AG04450 (cell line): ENCODE measurements at regions of chr9 and their contacts with region 1.

Region 1: GRCh38 chr9:97921959-97922724 is at the start of gene TRMO:
- DNase-seq: peak; percentile 98
- H3K4me3 ChIP-seq: peak within 1 kb of the TSS; percentile 81
- H3K27ac ChIP-seq: peak within 1 kb of the TSS; percentile 97
- H3K27me3 ChIP-seq: peaks cover 9% of the 10 kb centered on the region
- CTCF ChIP-seq: peak; percentile 75
- polyA plus RNA-seq, gene TRMO: 11.1 and 12.6 TPM in 2 replicates

Region 2: DNA sequence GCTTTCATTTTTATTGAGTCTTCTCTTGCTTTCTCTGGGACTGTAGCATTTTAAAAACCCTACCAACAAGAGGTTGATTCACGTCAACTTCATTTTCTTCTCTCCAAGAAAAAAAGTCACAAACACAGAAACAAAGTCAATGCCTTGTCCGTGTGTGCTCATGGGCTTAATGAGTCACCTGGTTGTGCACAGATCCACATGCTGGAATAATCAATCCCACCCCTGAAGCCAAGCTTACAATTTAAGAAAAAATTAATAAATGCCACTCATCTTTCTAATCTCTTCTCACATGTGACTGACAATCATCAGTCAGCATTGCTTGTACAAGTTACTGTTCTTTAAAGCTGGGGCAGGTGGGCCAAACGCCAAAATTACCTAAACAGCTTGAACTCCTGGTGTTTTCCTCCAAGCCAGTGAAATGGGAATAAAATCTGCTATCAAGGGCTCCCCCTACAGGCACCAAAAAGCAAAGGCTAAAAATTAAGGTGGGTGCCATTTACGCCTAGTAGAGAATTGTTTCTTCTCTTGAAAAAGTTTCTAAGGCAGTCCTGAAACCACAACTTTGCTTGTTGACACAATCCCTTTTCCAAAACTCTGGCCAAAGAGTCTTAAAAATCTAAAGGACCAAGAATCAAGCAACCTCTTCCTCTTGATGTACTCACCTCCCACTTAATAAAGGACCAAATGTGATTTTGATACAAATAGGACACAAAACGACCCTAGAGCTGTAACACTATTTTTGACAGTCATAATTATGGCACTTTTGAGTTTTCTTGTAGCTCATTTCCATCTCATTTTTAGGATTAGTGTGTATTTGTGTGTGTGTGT is 21.2 kb before region 1 on chr9:
- CTCF ChIA-PET with region 1: interaction called, 44 read pairs
- POLR2A ChIA-PET with region 1: interaction called, 7 read pairs
- DNase-seq: peak; percentile 21
- H3K4me3 ChIP-seq: no peak overlapping the region
- H3K27ac ChIP-seq: no peak overlapping the region
- H3K27me3 ChIP-seq: no peaks in the 10 kb centered on the region
- CTCF ChIP-seq: peak; percentile 79

Region 3: DNA sequence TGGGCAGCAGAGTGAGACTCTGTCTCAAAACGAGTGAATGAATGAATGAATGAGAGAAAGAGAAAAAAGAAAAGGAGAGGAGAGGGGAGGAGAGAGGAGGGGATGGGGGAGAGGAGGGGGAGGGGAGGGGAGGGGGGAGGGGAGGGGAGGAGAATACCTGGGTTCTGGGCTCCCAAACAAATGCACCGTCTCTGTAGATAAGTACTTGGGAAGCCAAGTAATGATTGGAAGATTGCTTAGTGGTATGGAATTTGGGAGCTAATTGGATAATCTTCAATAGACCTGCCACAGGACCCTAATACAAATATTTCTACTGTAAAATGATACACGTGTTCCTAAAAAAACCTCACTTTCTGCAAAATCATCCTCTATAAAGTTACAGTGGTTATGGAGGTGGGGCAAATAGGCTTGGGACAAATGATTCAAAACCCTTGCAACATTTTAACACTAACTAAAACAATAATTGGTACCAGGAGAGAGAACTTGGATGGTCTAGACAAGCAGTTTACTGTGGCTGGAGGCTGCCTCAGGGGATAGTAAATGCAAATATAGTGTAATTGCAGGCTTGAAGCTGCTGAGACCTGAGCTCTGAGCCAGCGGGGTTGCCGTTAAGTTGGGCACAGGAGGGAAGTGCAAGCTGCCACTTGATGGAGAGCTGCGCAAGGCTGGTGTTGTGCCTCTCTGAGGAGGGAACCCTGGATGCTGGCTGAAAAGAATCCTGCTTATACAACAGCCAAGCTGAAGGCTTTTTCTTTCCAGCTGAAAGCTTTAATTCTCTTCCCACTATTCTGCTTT is 12.4 kb after region 1 on chr9:
- CTCF ChIA-PET with region 1: interaction called, 15 read pairs
- POLR2A ChIA-PET with region 1: no interaction called
- DNase-seq: no peak
- H3K4me3 ChIP-seq: no peak overlapping the region
- H3K27ac ChIP-seq: no peak overlapping the region
- H3K27me3 ChIP-seq: peaks cover 35% of the 10 kb centered on the region
- CTCF ChIP-seq: no peak

Region 4: GRCh38 chr9:97958812-97959511 is 36.8 kb after region 1 on chr9:
- CTCF ChIA-PET with region 1: interaction called, 45 read pairs
- POLR2A ChIA-PET with region 1: interaction called, 5 read pairs
- DNase-seq: peak; percentile 63
- H3K4me3 ChIP-seq: no peak overlapping the region
- H3K27ac ChIP-seq: peak overlapping the region; percentile 33
- H3K27me3 ChIP-seq: peaks cover 10% of the 10 kb centered on the region
- CTCF ChIP-seq: no peak

Region 5: GRCh38 chr9:97990266-97990665 is 68.1 kb after region 1 on chr9:
- CTCF ChIA-PET with region 1: interaction called, 17 read pairs
- POLR2A ChIA-PET with region 1: interaction called, 3 read pairs
- DNase-seq: peak; percentile 42
- H3K4me3 ChIP-seq: no peak overlapping the region
- H3K27ac ChIP-seq: peak overlapping the region; percentile 43
- H3K27me3 ChIP-seq: no peaks in the 10 kb centered on the region
- CTCF ChIP-seq: peak; percentile 56

Region 6: GRCh38 chr9:98034593-98035546 is 112.7 kb after region 1 on chr9:
- CTCF ChIA-PET with region 1: interaction called, 34 read pairs
- POLR2A ChIA-PET with region 1: interaction called, 5 read pairs
- DNase-seq: no peak
- H3K4me3 ChIP-seq: no peak overlapping the region
- H3K27ac ChIP-seq: peak overlapping the region; percentile 90
- H3K27me3 ChIP-seq: no peaks in the 10 kb centered on the region
- CTCF ChIP-seq: peak; percentile 74

Region 7: GRCh38 chr9:98263482-98264357 is 341.6 kb after region 1 on chr9:
- CTCF ChIA-PET with region 1: interaction called, 11 read pairs
- POLR2A ChIA-PET with region 1: no interaction called
- DNase-seq: peak; percentile 61
- H3K4me3 ChIP-seq: no peak overlapping the region
- H3K27ac ChIP-seq: no peak overlapping the region
- H3K27me3 ChIP-seq: no peaks in the 10 kb centered on the region
- CTCF ChIP-seq: peak; percentile 99